OCI-LY7 (cell line): ENCODE measurements at regions of chrX and their contacts with region 1.

Region 1: GRCh38 chrX:54891573-54891972 is 29.1 kb upstream of the TRO start:
- DNase-seq: peak; percentile 34
- H3K4me3 ChIP-seq: no peak overlapping the region
- H3K27ac ChIP-seq: no peak overlapping the region
- H3K4me1 ChIP-seq: no peaks in the 10 kb centered on the region
- CTCF ChIP-seq: peak; percentile 67

Region 2: GRCh38 chrX:55008471-55009358 is 117.1 kb after region 1 on chrX:
- CTCF ChIA-PET with region 1: no interaction called
- POLR2A ChIA-PET with region 1: no interaction called
- intact Hi-C with region 1: no loop called
- DNase-seq: no peak
- H3K4me3 ChIP-seq: no peak overlapping the region
- H3K27ac ChIP-seq: no peak overlapping the region
- H3K4me1 ChIP-seq: no peaks in the 10 kb centered on the region
- CTCF ChIP-seq: no peak

Region 3: GRCh38 chrX:55057675-55058249 is 166.2 kb after region 1 on chrX:
- CTCF ChIA-PET with region 1: no interaction called
- POLR2A ChIA-PET with region 1: interaction called, 3 read pairs
- intact Hi-C with region 1: loop called (anchors 5 kb)
- DNase-seq: peak; percentile 32
- H3K4me3 ChIP-seq: no peak overlapping the region
- H3K27ac ChIP-seq: no peak overlapping the region
- H3K4me1 ChIP-seq: no peaks in the 10 kb centered on the region
- CTCF ChIP-seq: peak; percentile 80